Transverse colon (tissue), 4 donors: ENCODE measurements at regions of chr4 and their contacts with region 1.

Region 1: GRCh38 chr4:73729534-73730165 is 10.7 kb upstream of the CXCL8 start:
- DNase-seq: peak; percentile 67
- H3K4me3 ChIP-seq: no peak overlapping the region
- H3K27ac ChIP-seq: no peak overlapping the region
- H3K4me1 ChIP-seq: peaks cover 0 to 9% (median 3%) of the 10 kb centered on the region in 4 donors
- H3K27me3 ChIP-seq: no peaks in the 10 kb centered on the region
- CTCF ChIP-seq: peak; percentile 77 to 84 (median 79)
- EP300 ChIP-seq: no peak
- POLR2A ChIP-seq: no peak

Region 2: DNA sequence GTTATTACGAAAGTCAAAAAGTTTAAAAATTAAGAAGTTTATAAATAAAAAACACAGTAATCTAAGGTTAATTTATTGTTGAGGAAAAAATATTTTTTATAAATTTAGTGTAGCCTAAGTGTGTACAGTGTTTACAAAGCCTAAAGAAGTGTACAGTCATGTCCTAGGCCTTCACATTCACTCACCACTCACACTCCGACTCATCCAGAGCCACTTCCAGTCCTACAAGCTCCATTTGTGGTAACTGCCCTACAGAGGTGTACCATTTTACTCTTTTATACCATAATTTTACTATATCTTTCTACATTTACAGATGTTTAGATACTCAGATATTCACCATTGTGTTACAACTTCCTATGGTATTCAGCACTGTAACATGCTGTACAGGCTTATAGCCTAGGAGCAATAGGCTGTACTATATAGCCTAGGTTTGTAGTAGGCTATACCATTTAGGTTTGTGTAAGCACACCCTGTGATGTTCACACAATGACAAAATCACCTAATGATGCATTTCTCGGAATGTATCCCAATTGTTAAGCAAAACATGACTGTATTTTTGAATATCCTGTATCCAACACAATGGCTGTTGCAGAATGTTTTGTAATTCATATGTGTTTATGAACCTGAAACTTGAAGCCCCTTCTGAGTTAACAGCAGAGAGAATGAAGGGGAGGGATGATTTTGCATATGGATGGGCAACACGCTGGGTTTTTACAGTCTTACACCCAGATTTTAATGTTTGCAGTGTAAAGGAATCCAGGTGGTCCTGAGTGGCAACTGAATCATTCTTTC is 255.3 kb after region 1 on chr4:
- in situ Hi-C with region 1: no loop called
- intact Hi-C with region 1: no loop called
- DNase-seq: no peak
- H3K4me3 ChIP-seq: no peak overlapping the region
- H3K27ac ChIP-seq: no peak overlapping the region
- H3K4me1 ChIP-seq: no peaks in the 10 kb centered on the region
- H3K27me3 ChIP-seq: no peaks in the 10 kb centered on the region
- CTCF ChIP-seq: no peak
- EP300 ChIP-seq: no peak
- POLR2A ChIP-seq: no peak

Region 3: DNA sequence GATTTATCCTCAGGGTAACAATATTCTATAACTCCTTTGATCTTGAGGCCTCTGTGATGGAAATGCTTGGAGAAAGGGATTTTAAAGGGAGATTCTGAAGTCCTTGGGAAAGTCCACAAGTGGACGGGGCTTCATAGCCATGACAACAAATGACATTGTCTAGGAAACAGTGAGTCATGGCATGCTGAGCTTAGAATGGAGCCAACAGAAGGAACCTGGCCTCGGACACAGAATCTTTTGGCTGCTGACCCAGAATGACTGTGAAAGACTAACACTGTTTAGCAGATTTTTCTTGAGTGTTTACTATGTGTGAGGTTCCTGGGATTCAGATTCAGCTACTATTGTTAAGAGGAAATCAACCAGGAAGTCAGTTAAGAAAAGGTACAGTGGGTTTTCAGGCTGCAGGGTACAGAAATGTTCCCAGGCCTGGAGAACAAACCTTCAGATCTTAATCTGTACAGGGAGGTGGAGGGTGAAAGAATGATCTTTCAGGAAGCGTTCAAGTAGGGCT is 387.4 kb after region 1 on chr4:
- in situ Hi-C with region 1: no loop called
- intact Hi-C with region 1: loop called (anchors 10 kb)
- DNase-seq: peak; percentile 49
- H3K4me3 ChIP-seq: no peak overlapping the region
- H3K27ac ChIP-seq: peak overlapping the region; percentile 26 to 66 (median 53)
- H3K4me1 ChIP-seq: peaks cover 10 to 18% (median 14%) of the 10 kb centered on the region in 4 donors
- H3K27me3 ChIP-seq: no peaks in the 10 kb centered on the region
- CTCF ChIP-seq: no peak
- EP300 ChIP-seq: peak; percentile 11
- POLR2A ChIP-seq: no peak